Heart left ventricle (tissue), 16 donors: ENCODE measurements at regions of chr3 and their contacts with region 1.

Region 1: DNA sequence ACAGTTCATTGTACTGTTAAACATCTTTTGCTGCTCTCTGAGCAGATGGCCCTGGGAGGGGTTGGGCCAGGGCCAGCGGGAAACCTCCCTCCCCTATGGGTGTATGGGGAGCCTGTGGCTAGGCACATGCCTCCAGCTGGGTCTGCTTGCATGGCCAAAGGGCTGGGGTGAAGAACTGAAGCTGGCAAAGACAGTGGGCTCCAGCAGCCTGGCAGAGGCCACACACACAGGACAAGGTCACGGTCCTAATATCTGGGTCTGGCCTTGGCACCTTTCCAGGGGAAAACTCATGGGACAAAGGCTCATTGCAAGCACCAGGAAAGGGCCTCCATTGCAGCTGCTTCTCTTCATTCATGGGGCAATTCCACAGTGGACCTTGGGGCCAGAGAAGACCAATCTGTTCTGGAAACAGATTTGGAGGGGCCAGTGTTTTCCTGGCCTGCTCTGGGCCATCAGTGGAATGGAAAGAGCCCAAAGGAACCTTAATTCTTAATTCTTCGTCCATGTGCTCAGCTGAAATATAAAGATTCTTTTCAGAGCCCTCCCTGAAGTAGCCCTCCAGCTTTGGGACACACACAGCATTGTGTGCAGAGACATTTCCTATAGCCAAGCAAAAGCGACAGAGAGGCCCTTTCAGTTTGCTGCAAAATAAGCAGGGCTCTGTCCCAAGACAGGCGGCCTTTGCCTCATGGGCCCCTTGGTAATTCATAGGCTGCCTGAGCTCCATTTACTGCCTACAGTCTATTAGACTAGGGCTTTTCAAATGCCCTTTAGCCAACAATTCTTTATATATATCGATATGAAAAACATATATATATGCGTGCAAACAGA is 11.3 kb upstream of the LIMD1 start:
- DNase-seq: peak; percentile 71 to 87 (median 80)
- ATAC-seq: peak; percentile 85 to 92 (median 91)
- H3K4me3 ChIP-seq: no peak overlapping the region
- H3K27ac ChIP-seq: peak overlapping the region; percentile 0 to 74 (median 54)
- H3K4me1 ChIP-seq: peaks cover 0 to 33% (median 20%) of the 10 kb centered on the region in 12 donors
- H3K27me3 ChIP-seq: no peaks in the 10 kb centered on the region
- CTCF ChIP-seq: no peak
- POLR2A ChIP-seq: no peak

Region 2: GRCh38 chr3:45537970-45538640 is 45.1 kb before region 1 on chr3:
- intact Hi-C with region 1: loop called in 1 of 10 experiments (anchors 5 kb)
- DNase-seq: peak in 4 of 5 donors; percentile 58 to 77 (median 64)
- ATAC-seq: peak; percentile 66 to 85 (median 72)
- H3K4me3 ChIP-seq: peak overlapping the region in 1 of 12 donors; percentile 5
- H3K27ac ChIP-seq: peak overlapping the region; percentile 37 to 85 (median 78)
- H3K4me1 ChIP-seq: peaks cover 7 to 51% (median 27%) of the 10 kb centered on the region in 12 donors
- H3K27me3 ChIP-seq: no peaks in the 10 kb centered on the region
- CTCF ChIP-seq: no peak
- POLR2A ChIP-seq: no peak

Region 3: GRCh38 chr3:45546716-45547701 is 36.2 kb before region 1 on chr3:
- intact Hi-C with region 1: loop called in 1 of 10 experiments (anchors 5 kb)
- DNase-seq: no peak
- ATAC-seq: no peak
- H3K4me3 ChIP-seq: no peak overlapping the region
- H3K27ac ChIP-seq: peak overlapping the region in 10 of 12 donors; percentile 16 to 83 (median 50)
- H3K4me1 ChIP-seq: peaks cover 5 to 85% (median 41%) of the 10 kb centered on the region in 12 donors
- H3K27me3 ChIP-seq: no peaks in the 10 kb centered on the region
- CTCF ChIP-seq: peak in 9 of 12 donors; percentile 15 to 41 (median 28)
- POLR2A ChIP-seq: no peak